ENCODE measurements at regions of chrX and their contacts with region 1.

Region 1: DNA sequence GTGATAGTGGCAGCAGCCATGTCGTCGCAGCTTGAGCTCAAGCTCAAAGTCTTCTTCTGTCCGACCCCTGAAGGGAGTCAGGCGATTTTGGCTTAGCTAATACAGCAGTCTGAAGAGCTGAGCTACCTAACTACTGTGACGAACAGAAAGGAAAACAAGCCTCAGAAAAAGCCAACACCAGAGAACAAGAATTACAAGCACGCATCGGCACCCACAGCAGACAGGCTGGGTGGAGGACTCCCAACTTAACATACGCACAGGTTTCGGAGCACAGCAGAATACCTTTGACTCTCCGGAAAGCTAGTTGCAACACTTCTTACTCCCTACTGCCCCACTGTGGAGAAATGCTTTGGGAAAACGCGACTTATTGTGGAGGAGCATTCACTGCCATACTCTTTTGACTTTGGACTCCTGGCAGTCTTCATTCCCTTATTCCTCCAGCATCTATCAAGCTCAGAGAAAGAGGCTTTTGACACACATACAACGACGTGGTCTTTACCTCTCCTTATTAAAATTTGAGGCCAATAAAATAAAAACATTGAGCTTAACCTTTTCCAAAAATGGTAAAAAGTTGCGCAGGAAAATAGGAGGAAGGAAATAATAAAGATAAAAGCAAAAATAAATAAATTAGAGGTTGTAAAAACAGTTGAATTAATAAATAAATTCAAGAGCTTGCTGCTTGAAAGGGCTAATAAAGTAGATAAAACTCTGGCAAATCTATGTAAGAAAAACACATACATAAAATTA is 41.3 kb upstream of the GPC3 start:
- DNase-seq: peak; percentile 64
- H3K4me3 Mint-ChIP-seq: peak overlapping the region; percentile 29
- H3K27ac Mint-ChIP-seq: no peak overlapping the region
- H3K4me1 Mint-ChIP-seq: peaks cover 6% of the 10 kb centered on the region
- H3K27me3 Mint-ChIP-seq: no peaks in the 10 kb centered on the region

Region 2: DNA sequence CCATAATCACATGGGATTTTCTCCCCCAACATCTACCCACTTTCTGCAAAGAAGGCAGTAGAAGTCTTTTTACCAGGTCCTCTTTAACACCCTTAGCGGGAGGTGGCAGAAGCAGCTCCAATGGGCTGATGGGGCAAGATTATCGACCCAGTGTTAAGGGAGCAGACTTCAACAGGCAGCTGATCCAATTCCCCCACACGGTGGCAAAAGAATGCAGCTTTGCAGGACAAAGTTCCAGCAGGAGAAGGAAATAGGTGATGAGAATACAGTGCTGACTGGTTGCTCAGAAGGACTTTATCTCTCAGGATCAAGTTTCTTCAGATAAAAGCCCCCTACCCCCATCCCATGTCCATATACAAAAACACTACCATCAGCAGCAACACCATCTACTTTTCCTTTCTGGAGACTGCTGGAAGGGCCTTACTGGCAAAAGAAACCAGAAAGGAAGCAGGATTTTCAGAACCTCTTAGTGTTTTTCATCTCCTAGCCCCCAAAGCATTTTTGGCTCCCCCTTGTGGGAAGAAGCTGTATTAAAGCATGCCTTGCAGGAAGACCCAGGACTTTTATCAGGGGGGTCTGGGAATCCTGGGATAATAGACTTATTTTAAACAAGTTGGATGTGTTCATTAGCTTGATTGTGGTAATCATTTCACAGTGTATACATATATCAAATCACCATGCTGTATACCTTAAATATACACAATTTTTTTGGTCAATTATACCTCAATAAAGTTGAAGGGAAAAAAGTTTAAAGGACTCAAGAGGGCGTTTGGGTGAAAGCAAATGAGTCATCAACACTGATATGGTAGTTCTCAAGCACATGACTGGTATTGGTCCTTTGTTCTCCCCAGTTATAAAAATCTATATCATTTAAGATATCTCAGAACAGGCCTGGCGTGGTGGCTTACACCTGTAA is 187.7 kb before region 1 on chrX:
- CTCF ChIA-PET with region 1: interaction called, 3 read pairs
- intact Hi-C with region 1: loop called (anchors 5 kb)
- DNase-seq: peak; percentile 45
- H3K4me3 Mint-ChIP-seq: no peak overlapping the region
- H3K27ac Mint-ChIP-seq: no peak overlapping the region
- H3K4me1 Mint-ChIP-seq: no peaks in the 10 kb centered on the region
- H3K27me3 Mint-ChIP-seq: no peaks in the 10 kb centered on the region

Region 3: DNA sequence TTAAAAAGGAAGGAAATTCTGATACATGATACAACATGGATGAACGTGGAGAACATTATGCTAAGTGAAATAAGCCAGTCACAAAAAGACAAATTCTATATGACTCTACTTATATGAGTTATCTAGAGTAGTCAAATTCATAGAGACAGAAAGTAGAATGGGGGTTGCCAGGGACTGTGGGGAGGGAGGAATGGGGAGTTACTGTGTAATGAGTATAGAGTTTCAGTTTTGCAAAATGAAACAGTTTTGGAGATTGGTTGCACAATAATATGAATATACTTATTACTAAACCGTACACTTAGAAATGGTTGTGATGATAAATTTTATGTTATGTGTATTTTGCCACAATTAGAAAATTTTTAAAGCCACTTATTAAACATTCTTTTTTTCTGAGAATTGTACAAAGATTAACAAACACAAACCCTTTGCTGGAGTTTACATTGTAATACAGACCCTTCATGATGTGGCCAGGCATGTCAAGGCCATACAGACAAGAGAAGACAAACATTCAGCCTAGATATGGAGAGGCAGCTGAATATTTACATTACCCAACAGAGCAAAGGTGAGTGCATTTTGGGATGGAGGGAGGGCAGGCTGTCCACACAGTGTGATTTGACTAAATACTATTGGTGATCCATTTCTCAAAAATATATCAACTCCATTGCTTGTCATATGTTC is 20.1 kb before region 1 on chrX:
- CTCF ChIA-PET with region 1: interaction called, 4 read pairs
- intact Hi-C with region 1: loop called (anchors 2 kb)
- DNase-seq: peak; percentile 52
- H3K4me3 Mint-ChIP-seq: no peak overlapping the region
- H3K27ac Mint-ChIP-seq: no peak overlapping the region
- H3K4me1 Mint-ChIP-seq: peaks cover 6% of the 10 kb centered on the region
- H3K27me3 Mint-ChIP-seq: no peaks in the 10 kb centered on the region

Region 4: GRCh38 chrX:134251241-134251640 is 224.5 kb after region 1 on chrX:
- CTCF ChIA-PET with region 1: no interaction called
- intact Hi-C with region 1: loop called (anchors 10 kb)
- DNase-seq: no peak
- H3K4me3 Mint-ChIP-seq: no peak overlapping the region
- H3K27ac Mint-ChIP-seq: no peak overlapping the region
- H3K4me1 Mint-ChIP-seq: peaks cover 5% of the 10 kb centered on the region
- H3K27me3 Mint-ChIP-seq: no peaks in the 10 kb centered on the region

Measured in activated naive CD4-positive, alpha-beta T cell treated with anti-CD3 and anti-CD28 coated beads for 36 hours (primary cell).